Thyroid gland (tissue), 4 donors: ENCODE measurements at regions of chr7 and their contacts with region 1.

Region 1: DNA sequence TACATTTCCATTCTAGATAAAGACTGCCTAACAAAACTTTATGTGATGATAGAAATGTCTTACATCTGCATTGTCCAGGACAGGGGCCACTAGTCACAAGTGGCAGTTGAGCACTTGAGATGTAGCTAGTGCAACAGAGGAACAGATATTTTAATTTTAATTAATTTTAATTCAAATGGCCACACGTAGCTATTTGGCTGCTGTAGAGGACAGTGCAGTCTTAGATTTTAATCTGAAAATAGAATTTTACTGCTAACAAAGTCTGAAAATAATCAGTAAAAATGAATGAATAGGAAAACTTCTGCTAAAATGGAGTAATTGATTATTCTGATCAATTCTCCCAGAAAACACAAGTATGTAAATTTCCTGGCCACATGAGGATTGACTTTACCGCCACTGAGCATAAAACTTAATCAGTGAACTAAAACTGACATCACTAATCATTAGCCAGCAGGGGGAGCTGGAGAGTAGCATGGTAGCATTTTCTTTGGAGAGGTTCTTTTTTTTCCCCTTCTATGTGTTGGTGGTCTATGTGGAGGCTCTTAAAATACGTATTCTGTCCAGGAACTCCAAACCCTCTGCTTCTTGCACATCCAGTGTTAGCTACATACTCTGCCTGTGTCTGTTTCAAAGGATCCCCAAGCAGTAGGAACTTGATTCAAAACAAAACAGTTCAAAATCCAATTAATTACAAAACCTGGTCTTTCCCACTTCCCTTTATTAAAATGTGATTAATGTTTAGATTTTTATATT is 52.1 kb downstream of the TSPAN12 start:
- DNase-seq: peak; percentile 41 to 63
- H3K4me3 ChIP-seq: no peak overlapping the region
- H3K27ac ChIP-seq: no peak overlapping the region
- H3K4me1 ChIP-seq: no peaks in the 10 kb centered on the region
- H3K27me3 ChIP-seq: no peaks in the 10 kb centered on the region
- CTCF ChIP-seq: peak; percentile 55 to 88 (median 76)
- POLR2A ChIP-seq: no peak

Region 2: DNA sequence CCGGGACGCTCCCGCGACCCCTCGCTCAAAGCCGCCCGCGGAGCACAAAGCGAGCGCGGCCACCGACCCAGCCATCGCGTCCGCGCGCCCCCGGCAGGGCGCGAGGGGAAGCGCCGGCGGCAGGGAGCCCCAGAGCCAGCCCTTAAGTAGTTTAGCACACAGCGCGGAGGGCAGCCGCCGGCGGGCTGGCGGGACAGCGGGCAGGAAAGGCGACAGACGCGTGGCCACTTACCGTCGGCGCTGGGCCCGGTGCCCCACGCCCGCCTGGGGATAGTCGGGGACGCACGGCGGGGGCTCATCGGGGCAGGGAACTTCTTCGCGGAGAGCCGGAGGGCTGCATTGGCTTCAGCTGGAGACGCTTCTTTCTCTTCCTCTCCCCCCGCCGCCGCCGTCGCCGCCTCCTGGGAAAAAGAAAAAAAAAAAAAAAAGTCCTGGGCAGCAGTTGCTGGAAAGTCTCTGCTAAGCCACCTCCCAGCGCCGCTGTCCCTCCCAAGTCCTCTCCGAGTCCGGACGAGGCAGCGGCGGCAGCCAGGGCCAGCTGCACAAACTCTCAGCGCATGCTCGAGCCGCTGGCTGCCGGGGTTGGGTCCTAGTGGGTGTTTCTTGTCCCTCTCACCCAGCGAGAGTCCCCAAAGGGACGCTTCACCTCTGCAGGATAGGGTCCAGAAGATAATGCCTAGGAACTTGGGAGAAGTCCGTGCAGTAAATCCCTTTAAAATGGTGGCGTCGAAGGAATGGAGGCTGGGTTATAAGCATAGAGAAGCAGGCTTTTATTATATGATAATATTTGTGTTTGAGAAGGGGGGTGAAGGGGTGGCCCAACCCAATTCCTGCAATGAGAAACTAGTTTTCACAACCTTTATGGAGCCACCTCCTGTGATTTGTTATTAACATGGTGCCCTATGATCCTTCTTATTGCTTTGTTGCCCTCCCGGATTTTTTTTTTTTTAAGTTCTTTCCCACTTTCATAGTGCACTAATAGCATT is 52.1 kb after region 1 on chr7 and contains the start of gene TSPAN12:
- intact Hi-C with region 1: loop called (anchors 10 kb)
- DNase-seq: peak; percentile 92 to 94
- H3K4me3 ChIP-seq: peak within 1 kb of the TSS; percentile 72 to 88 (median 79)
- H3K27ac ChIP-seq: peak within 1 kb of the TSS; percentile 93 to 97 (median 96)
- H3K4me1 ChIP-seq: peaks cover 12 to 17% of the 10 kb centered on the region in 2 donors
- H3K27me3 ChIP-seq: no peaks in the 10 kb centered on the region
- CTCF ChIP-seq: peak; percentile 32 to 91 (median 72)
- POLR2A ChIP-seq: peak in 1 of 2 donors; percentile 75
- total RNA-seq, gene TSPAN12: 36.2 to 55.1 (median 48.8) TPM